ENCODE measurements at regions of chr22 and their contacts with region 1.

Region 1: GRCh38 chr22:36454916-36455570 is 26.4 kb downstream of the TXN2 start:
- DNase-seq: peak; percentile 90 to 95 (median 95)
- H3K4me3 ChIP-seq: peak overlapping the region; percentile 58
- H3K27ac ChIP-seq: peak overlapping the region; percentile 85 to 86
- H3K4me1 ChIP-seq: peaks cover 8% of the 10 kb centered on the region
- H3K27me3 ChIP-seq: no peaks in the 10 kb centered on the region
- CTCF ChIP-seq: peak in 2 of 3 donors; percentile 15 to 21
- EP300 ChIP-seq: peak; percentile 51
- POLR2A ChIP-seq: peak; percentile 65

Region 2: GRCh38 chr22:36352803-36353507 is 102.1 kb before region 1 on chr22:
- intact Hi-C with region 1: loop called in 2 of 4 experiments (anchors 10 kb)
- DNase-seq: peak; percentile 65 to 87 (median 83)
- H3K4me3 ChIP-seq: no peak overlapping the region
- H3K27ac ChIP-seq: peak overlapping the region; percentile 43 to 76
- H3K4me1 ChIP-seq: peaks cover 44% of the 10 kb centered on the region
- H3K27me3 ChIP-seq: no peaks in the 10 kb centered on the region
- CTCF ChIP-seq: no peak
- EP300 ChIP-seq: no peak
- POLR2A ChIP-seq: no peak

Region 3: GRCh38 chr22:36387752-36388518 is 67.1 kb before region 1 on chr22 and contains the start of gene MYH9:
- intact Hi-C with region 1: loop called in 2 of 4 experiments (anchors 5 to 10 kb)
- DNase-seq: peak; percentile 100
- H3K4me3 ChIP-seq: peak within 1 kb of the TSS; percentile 68
- H3K27ac ChIP-seq: peak within 1 kb of the TSS; percentile 66 to 74
- H3K4me1 ChIP-seq: peaks cover 5% of the 10 kb centered on the region
- H3K27me3 ChIP-seq: no peaks in the 10 kb centered on the region
- CTCF ChIP-seq: no peak
- EP300 ChIP-seq: no peak
- POLR2A ChIP-seq: peak; percentile 91
- total RNA-seq, gene MYH9: 128 to 452 (median 348) TPM

Region 4: DNA sequence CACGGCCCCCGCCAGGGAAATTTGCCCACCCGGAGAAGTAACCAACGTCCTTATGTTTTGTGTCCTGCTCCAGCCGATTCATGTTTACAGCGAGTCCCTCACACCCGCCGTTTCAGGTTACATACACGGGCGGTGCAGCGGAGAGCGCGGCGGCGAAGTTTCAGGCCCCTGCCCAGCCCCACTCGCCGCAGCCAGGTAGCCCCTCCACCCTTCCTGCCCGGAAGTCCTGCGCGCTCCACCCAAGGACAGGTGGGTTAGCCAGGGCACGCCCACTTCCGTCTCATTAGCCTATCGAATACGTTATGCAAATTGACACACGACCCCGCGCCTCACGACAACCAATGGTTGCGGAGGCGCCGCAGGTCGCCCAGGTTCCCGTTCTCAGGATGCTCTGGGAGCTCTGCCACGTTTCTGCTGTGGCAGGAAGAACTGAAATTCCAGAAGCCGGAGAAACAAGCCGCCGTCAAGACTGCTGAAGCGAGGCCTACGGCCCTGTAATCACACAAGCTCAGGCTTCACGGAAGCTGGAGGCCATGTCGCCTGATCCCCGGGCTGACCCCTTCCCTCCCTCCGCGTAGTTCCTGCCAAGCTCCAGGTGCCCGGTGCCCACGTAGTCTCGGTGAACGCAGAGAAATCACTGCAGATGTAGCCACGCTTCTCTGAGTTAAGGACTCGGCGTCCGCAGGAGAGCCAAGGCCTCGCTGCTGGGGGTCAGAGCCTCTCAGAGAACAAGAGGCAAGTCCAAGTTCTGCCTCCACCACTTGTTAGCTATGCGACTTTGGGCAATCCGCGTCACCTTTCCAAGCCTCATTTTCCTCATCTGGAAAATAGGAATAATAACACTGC is 44.9 kb before region 1 on chr22:
- intact Hi-C with region 1: no loop called
- DNase-seq: peak; percentile 86 to 95 (median 91)
- H3K4me3 ChIP-seq: peak overlapping the region; percentile 15
- H3K27ac ChIP-seq: peak overlapping the region in 1 of 2 donors; percentile 90
- H3K4me1 ChIP-seq: no peaks in the 10 kb centered on the region
- H3K27me3 ChIP-seq: no peaks in the 10 kb centered on the region
- CTCF ChIP-seq: peak in 1 of 3 donors; percentile 42
- EP300 ChIP-seq: no peak
- POLR2A ChIP-seq: peak; percentile 29

Region 5: DNA sequence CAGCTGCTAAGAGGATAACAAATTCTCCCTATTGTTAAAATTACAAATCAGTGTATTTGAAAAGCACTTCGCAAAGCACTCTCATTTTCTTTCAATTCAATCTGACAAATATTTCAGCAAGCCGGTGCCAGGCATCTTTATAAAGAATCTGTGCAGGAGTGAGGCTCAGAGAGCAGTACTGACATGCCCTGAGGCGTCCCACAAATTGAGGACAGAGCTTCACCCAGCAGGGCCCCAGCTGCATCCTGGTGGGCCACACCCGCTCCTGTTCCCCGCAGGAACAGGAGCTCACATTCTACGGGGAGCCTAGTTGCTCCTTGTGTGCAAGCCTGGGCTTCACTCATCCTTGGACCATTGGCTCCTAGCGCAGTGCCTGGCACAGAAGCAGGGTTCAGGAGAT is 134.8 kb after region 1 on chr22:
- intact Hi-C with region 1: no loop called
- DNase-seq: no peak
- H3K4me3 ChIP-seq: no peak overlapping the region
- H3K27ac ChIP-seq: no peak overlapping the region
- H3K4me1 ChIP-seq: no peaks in the 10 kb centered on the region
- H3K27me3 ChIP-seq: no peaks in the 10 kb centered on the region
- CTCF ChIP-seq: no peak
- EP300 ChIP-seq: no peak
- POLR2A ChIP-seq: no peak